ENCODE measurements at regions of chr14 and their contacts with region 1.

Region 1: GRCh38 chr14:90767899-90768298 is 48.3 kb downstream of the TTC7B start:
- DNase-seq: no peak
- H3K4me3 ChIP-seq: no peak overlapping the region
- H3K27ac ChIP-seq: no peak overlapping the region
- H3K4me1 ChIP-seq: no peaks in the 10 kb centered on the region
- H3K27me3 ChIP-seq: no peaks in the 10 kb centered on the region
- CTCF ChIP-seq: no peak
- POLR2A ChIP-seq: no peak

Region 2: GRCh38 chr14:90266441-90267154 is 501.3 kb before region 1 on chr14:
- intact Hi-C with region 1: loop called (anchors 5 kb)
- DNase-seq: no peak
- H3K4me3 ChIP-seq: no peak overlapping the region
- H3K27ac ChIP-seq: no peak overlapping the region
- H3K4me1 ChIP-seq: no peaks in the 10 kb centered on the region
- H3K27me3 ChIP-seq: no peaks in the 10 kb centered on the region
- CTCF ChIP-seq: no peak
- POLR2A ChIP-seq: no peak

Region 3: GRCh38 chr14:90874599-90874998 is 106.7 kb after region 1 on chr14:
- intact Hi-C with region 1: no loop called
- DNase-seq: no peak
- H3K4me3 ChIP-seq: no peak overlapping the region
- H3K27ac ChIP-seq: no peak overlapping the region
- H3K4me1 ChIP-seq: no peaks in the 10 kb centered on the region
- H3K27me3 ChIP-seq: no peaks in the 10 kb centered on the region
- CTCF ChIP-seq: no peak
- POLR2A ChIP-seq: no peak

Measured in breast epithelium (tissue), 4 donors.